Left cardiac atrium (tissue), 4 donors: ENCODE measurements at regions of chr12 and their contacts with region 1.

Region 1: DNA sequence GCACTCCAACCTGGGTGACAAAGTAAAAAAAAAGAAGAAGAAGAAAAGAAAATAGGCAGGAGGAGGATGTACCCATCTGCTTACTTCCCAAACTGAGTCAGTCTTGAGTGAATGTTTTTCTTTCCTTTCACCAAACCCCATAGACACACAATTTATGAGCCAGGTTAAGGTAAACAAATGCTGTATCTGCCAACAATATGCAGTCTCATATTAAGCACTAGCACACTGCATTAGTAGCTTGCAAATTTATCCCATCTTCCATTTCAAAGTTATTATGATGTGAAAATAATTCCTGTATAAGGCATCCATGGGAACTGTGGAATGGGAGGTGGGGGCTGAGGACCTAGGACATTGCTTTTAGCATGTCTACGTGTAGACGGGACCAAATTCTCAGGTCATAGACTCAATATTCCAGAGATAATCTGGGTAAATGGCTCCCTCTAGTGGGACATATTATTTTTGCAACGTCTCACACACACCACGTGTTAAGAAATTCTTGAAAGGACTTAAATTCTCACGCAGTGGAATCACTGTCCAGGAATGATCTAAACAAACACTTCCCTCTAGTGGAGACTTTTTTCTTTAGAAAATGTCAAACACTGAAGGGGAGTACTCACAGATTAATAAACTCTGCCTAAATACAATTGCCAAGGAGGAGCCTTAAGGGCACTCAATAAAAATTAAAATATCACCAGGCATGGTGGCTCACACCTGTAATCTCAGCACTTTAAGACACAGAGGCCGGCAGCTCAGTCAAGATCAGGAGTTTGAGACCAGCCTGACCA is 17.1 kb upstream of the OR10P1 start:
- DNase-seq: no peak
- ATAC-seq: peak; percentile 93 to 94

Region 2: DNA sequence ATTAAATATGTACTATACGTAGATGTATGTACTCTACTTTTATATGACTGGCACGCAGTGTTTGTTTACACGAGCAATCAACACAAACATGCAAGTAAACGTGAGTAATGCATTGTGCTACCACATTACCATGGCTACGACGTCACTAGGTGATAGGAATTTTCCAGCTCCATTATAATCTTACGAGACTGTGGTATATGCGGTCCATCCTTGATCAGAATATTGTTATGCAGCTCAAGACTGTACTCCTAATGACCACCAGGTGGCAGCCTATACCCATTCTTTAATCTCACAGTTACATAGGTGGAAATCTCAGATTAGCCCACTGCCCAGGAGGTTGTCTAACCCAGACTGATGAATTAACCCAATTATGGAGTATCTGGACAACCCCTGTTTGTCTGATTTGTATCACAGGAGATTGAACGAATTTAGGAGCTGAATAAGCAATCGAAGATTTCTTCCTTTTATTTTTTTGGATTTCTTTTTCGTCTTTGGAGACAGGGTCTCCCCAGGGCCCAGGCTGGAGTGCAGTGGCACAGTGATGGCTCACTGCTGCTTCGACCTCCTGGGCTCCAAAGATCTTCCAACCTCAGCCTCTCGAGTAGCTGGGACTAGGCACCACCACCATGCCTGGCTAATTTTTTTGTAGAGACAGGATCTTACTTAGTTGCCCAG is 626.2 kb before region 1 on chr12:
- intact Hi-C with region 1: loop called in 1 of 2 experiments (anchors 10 kb)
- DNase-seq: no peak
- ATAC-seq: peak; percentile 75 to 81

Region 3: GRCh38 chr12:55188974-55189556 is 430.5 kb before region 1 on chr12:
- intact Hi-C with region 1: loop called (anchors 1 to 5 kb)
- DNase-seq: no peak
- ATAC-seq: peak in 1 of 2 donors; percentile 68

Region 4: DNA sequence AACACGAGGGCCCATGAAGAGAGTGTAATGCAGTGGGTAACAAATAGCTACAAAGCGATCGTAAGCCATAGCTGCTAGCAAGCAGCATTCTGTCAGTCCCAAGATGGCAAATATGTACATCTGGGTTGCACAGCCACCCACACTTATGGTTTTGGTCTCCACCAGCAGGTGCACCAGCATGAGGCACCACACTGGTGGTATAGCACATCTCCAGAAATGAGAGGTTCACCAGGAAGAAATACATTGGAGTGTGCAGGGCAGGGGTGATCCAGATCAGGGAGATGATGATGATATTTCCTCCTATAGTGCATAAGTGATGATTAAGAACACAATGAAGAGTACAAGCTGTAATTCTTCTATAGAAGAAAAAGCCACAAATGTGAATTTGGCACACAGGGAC is 425.2 kb before region 1 on chr12:
- intact Hi-C with region 1: loop called (anchors 1 to 5 kb)
- DNase-seq: no peak
- ATAC-seq: no peak

Region 5: DNA sequence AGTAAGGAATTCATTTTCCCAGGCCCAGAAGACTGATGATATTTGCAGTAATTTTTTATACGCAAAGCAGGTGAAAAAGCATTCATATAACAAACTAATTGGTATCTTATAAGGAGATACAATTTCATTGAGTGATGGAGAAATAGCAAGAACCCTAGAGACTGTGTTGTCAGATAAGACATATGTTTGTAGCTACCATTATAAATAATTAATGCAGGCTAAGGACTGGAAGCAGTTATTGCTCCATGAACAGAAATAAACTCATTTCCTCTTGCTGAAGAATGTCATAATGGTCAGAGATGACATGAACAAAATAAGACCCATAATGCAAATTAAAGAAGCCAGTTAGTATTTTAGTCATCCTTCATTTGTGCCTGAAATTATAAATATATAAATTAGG is 174.2 kb before region 1 on chr12:
- intact Hi-C with region 1: loop called (anchors 2 to 10 kb)
- DNase-seq: no peak
- ATAC-seq: no peak

Region 6: DNA sequence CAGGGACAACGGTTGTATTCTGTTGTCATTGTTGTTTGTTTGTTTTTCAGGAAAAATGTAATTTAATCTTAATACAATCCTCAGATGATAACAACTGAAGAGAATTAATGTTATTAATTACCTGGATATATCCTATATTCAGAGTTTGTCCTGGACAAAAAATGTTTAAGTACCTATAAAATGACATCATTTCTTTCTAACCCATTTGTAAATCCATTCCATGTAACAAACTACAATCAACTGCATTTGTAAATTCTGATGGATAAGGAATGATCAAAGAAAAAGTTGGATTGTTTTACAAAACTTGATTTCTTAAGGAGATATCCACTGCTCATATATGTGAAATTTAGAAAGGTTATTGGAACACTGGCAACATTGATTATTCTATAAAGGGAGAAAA is 167.9 kb before region 1 on chr12:
- intact Hi-C with region 1: loop called in 1 of 2 experiments (anchors 10 kb)
- DNase-seq: no peak
- ATAC-seq: no peak

Region 7: GRCh38 chr12:56041552-56042429 is 422.2 kb after region 1 on chr12 and contains the start of gene RPS26:
- intact Hi-C with region 1: no loop called
- DNase-seq: peak; percentile 98
- ATAC-seq: peak; percentile 97 to 98
- total RNA-seq, gene RPS26: 28.5 to 47.1 TPM